B cell (primary cell): ENCODE measurements at regions of chr9 and their contacts with region 1.

Region 1: DNA sequence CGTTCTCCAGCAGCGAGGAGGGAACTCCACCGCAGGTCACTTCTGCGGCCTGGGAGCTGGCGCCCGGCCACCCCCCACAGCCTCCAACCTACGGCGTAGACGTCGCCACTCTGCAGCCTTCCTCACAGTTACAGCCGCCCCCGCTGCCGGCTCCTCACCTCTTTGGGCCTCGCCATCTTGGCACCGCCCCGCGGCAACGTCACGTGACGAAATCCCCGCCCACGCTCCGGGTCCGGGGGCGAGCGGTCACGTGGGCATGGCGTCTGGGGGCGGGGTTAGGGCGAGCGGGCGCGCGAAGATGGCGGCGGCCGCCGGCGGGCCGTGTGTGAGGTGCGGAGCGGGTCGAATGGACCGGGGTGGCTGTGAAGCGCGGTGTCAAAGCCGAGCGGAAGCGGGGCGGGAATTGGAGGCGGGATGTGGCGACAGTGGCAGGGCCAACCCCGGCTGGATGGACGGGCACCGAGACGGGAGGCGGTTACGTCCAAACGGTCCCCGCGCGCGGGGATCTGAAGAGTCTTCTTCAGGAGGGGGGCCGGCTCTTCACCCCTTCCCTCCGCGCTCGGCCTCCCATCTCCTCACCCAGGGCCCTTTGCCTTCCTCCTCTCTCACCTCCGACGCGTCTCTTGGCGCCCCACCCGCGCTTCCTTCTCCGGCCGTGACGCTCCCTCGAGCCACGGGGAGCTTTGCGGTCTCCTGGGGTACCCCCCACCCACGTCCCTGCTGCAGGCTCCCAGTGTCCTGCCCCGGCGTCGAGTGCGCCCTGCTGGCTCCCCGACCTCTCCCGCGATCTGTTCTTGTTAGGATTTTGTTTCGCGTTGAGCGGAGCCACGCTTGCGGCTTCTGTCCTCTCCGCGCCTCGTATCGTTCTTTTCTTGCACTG is at the starts of genes DOLK and NUP188:
- DNase-seq: peak; percentile 98
- ATAC-seq: peak; percentile 86
- H3K4me3 ChIP-seq: peak within 1 kb of the TSS; percentile 64 to 95 (median 84)
- H3K4me3 Mint-ChIP-seq: peak within 1 kb of the TSS; percentile 97
- H3K27ac ChIP-seq: peak within 1 kb of the TSS; percentile 91 to 96
- H3K27ac Mint-ChIP-seq: peak within 1 kb of the TSS; percentile 98
- H3K4me1 ChIP-seq: peaks cover 15 to 18% of the 10 kb centered on the region in 2 donors
- H3K4me1 Mint-ChIP-seq: peaks cover 27% of the 10 kb centered on the region
- H3K27me3 ChIP-seq: no peaks in the 10 kb centered on the region
- H3K27me3 Mint-ChIP-seq: no peaks in the 10 kb centered on the region
- CTCF ChIP-seq: no peak
- total RNA-seq, gene DOLK: 11.1 and 12.2 TPM in 2 replicates
- total RNA-seq, gene NUP188: 83.6 and 93.2 TPM in 2 replicates

Region 2: GRCh38 chr9:128370826-128371621 is 576.6 kb before region 1 on chr9 and contains the start of gene URM1:
- CTCF ChIA-PET with region 1: no interaction called
- POLR2A ChIA-PET with region 1: no interaction called
- intact Hi-C with region 1: loop called (anchors 5 kb)
- DNase-seq: peak; percentile 96
- ATAC-seq: peak; percentile 94
- H3K4me3 ChIP-seq: peak within 1 kb of the TSS; percentile 86 to 98 (median 90)
- H3K4me3 Mint-ChIP-seq: peak within 1 kb of the TSS; percentile 95
- H3K27ac ChIP-seq: peak within 1 kb of the TSS; percentile 83 to 96
- H3K27ac Mint-ChIP-seq: peak within 1 kb of the TSS; percentile 96
- H3K4me1 ChIP-seq: peaks cover 15 to 23% of the 10 kb centered on the region in 2 donors
- H3K4me1 Mint-ChIP-seq: peaks cover 30% of the 10 kb centered on the region
- H3K27me3 ChIP-seq: no peaks in the 10 kb centered on the region
- H3K27me3 Mint-ChIP-seq: no peaks in the 10 kb centered on the region
- CTCF ChIP-seq: no peak
- total RNA-seq, gene URM1: 35.6 and 43.8 TPM in 2 replicates

Region 3: DNA sequence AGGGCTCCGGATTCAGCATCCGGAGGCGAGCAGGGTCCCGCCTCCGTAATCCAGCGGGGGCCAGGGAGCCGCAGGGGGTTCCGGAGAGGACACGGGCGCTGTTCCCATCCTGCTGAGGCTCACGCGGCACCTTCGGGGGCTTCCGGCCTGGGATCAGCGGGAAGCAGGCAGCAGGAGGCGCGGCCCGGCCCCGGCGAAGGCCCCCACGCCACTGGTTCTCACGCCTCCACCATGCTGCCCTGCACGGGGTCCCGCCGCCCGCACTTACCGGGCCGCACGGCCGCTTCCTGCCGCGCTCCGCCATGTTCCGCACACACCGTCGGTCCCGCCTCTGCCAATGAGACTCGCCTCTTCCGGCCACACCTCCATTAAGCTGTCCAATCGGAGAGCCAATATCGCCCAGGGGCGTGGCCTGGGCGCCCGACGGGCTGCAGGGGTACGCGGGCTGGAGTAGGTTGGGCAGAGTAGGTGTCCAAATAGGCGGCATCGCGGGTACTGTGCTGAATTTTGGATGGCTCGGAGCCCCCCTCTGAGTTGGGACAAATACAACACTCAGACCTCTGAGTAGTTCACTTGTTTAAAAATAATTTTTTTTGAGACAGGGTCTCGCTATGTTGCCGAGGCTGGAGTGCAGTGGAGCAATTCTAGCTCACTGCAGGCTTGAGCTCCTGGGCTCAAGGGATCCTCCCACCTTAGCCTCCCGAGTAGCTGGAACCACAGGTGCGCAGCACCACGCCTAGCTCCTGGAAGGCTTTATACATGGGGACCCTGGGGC is 118.0 kb before region 1 on chr9 and contains the start of gene SPOUT1:
- CTCF ChIA-PET with region 1: no interaction called
- POLR2A ChIA-PET with region 1: interaction called, 3 read pairs
- intact Hi-C with region 1: loop called (anchors 1 kb)
- DNase-seq: peak; percentile 95
- ATAC-seq: peak; percentile 99
- H3K4me3 ChIP-seq: peak within 1 kb of the TSS; percentile 43 to 97 (median 91)
- H3K4me3 Mint-ChIP-seq: peak within 1 kb of the TSS; percentile 97
- H3K27ac ChIP-seq: peak within 1 kb of the TSS; percentile 42 to 74
- H3K27ac Mint-ChIP-seq: peak within 1 kb of the TSS; percentile 95
- H3K4me1 ChIP-seq: peaks cover 12 to 17% of the 10 kb centered on the region in 2 donors
- H3K4me1 Mint-ChIP-seq: peaks cover 19% of the 10 kb centered on the region
- H3K27me3 ChIP-seq: no peaks in the 10 kb centered on the region
- H3K27me3 Mint-ChIP-seq: no peaks in the 10 kb centered on the region
- CTCF ChIP-seq: no peak
- total RNA-seq, gene SPOUT1: 70.0 and 73.0 TPM in 2 replicates

Region 4: DNA sequence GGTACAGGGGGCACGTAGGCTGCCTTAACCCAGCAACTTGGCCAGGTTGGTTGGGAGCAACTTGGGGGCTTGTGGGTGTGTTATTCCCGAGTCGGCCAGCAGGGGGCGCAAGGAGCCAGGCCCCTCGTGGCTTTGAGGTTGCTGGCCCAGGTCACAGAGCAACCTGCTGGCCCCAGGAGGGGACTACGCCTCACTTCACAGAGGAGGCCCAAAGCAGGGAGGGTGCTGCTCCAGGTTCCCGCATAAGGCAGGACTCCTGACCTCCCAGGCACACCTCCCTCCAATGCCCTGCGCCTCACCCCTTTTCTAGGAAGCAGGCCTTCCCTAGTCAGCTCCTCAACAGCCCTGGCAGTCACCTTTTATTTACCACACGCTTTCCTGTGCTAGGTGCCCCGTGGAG is 84.0 kb before region 1 on chr9:
- CTCF ChIA-PET with region 1: interaction called, 3 read pairs
- POLR2A ChIA-PET with region 1: no interaction called
- intact Hi-C with region 1: loop called (anchors 1 kb)
- DNase-seq: peak; percentile 86
- ATAC-seq: peak; percentile 98
- H3K4me3 ChIP-seq: no peak overlapping the region
- H3K4me3 Mint-ChIP-seq: no peak overlapping the region
- H3K27ac ChIP-seq: no peak overlapping the region
- H3K27ac Mint-ChIP-seq: peak overlapping the region; percentile 37
- H3K4me1 ChIP-seq: peaks cover 3 to 4% of the 10 kb centered on the region in 2 donors
- H3K4me1 Mint-ChIP-seq: peaks cover 4% of the 10 kb centered on the region
- H3K27me3 ChIP-seq: no peaks in the 10 kb centered on the region
- H3K27me3 Mint-ChIP-seq: no peaks in the 10 kb centered on the region
- CTCF ChIP-seq: peak; percentile 92

Region 5: DNA sequence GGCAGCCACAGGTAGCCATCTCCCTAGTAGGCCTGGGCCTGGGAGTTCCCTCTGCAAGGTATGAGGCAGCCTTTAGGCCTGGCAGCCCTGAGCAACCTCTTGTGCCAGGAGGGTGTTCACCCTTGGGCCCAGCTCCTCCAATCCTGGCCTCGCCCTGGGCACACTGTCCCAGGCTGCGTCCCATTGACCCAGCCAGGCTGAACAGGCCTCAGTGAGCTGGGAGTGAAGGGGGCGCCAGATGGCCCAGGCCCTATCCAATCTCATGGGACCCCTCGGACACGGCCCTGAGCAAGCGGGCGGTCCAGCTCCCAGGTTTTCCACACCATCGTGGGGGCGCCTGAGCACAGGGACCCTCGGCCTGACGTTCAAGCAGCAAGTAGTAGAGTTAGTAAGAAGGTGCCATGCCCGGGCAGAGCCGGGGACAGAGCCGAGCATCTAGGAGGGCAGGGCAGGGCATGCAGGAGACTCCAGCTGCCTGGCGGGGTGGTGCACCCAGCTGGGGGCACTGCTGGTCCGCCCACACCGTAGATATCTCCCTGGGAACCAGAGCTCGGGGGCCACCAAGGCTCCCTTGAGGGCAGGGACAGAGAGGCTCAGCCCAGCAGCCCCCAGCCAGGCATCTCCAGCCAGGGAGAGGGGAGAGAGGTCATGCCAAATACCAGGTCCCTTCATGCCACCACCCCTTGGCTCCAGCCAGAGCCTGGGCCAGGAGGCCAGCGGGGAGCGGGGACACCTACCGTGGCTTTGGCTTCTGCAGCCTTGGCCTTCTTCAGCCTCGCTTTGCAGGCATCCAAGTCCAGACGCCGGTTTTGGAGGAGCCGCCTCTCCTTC is 66.2 kb after region 1 on chr9:
- CTCF ChIA-PET with region 1: no interaction called
- POLR2A ChIA-PET with region 1: no interaction called
- intact Hi-C with region 1: no loop called
- DNase-seq: no peak
- ATAC-seq: no peak
- H3K4me3 ChIP-seq: no peak overlapping the region
- H3K4me3 Mint-ChIP-seq: no peak overlapping the region
- H3K27ac ChIP-seq: no peak overlapping the region
- H3K27ac Mint-ChIP-seq: no peak overlapping the region
- H3K4me1 ChIP-seq: no peaks in the 10 kb centered on the region
- H3K4me1 Mint-ChIP-seq: no peaks in the 10 kb centered on the region
- H3K27me3 ChIP-seq: no peaks in the 10 kb centered on the region
- H3K27me3 Mint-ChIP-seq: no peaks in the 10 kb centered on the region
- CTCF ChIP-seq: no peak

Region 6: GRCh38 chr9:129028192-129028957 is 80.7 kb after region 1 on chr9 and contains the start of gene SH3GLB2:
- CTCF ChIA-PET with region 1: no interaction called
- POLR2A ChIA-PET with region 1: no interaction called
- intact Hi-C with region 1: loop called (anchors 1 kb)
- DNase-seq: peak; percentile 93
- ATAC-seq: peak; percentile 96
- H3K4me3 ChIP-seq: peak within 1 kb of the TSS; percentile 11 to 76 (median 63)
- H3K4me3 Mint-ChIP-seq: peak within 1 kb of the TSS; percentile 89
- H3K27ac ChIP-seq: peak within 1 kb of the TSS in 1 of 2 donors; percentile 70
- H3K27ac Mint-ChIP-seq: peak within 1 kb of the TSS; percentile 84
- H3K4me1 ChIP-seq: peaks cover 11 to 16% of the 10 kb centered on the region in 2 donors
- H3K4me1 Mint-ChIP-seq: peaks cover 19% of the 10 kb centered on the region
- H3K27me3 ChIP-seq: no peaks in the 10 kb centered on the region
- H3K27me3 Mint-ChIP-seq: no peaks in the 10 kb centered on the region
- CTCF ChIP-seq: peak; percentile 21
- total RNA-seq, gene SH3GLB2: 110 and 111 TPM in 2 replicates